ENCODE measurements at regions of chr1 and their contacts with region 1.

Region 1: GRCh38 chr1:174999216-174999925 is 376 bp upstream of the CACYBP start:
- DNase-seq: peak; percentile 95 to 99 (median 97)
- ATAC-seq: peak; percentile 75
- H3K4me3 ChIP-seq: peak overlapping the region; percentile 70
- H3K4me3 Mint-ChIP-seq: no peak overlapping the region
- H3K27ac ChIP-seq: peak overlapping the region; percentile 96 to 100
- H3K27ac Mint-ChIP-seq: no peak overlapping the region
- H3K4me1 ChIP-seq: peaks cover 23% of the 10 kb centered on the region
- H3K4me1 Mint-ChIP-seq: peaks cover 46% of the 10 kb centered on the region
- H3K27me3 ChIP-seq: no peaks in the 10 kb centered on the region
- H3K27me3 Mint-ChIP-seq: no peaks in the 10 kb centered on the region
- CTCF ChIP-seq: no peak

Region 2: GRCh38 chr1:173476664-173477285 is 1522.6 kb before region 1 on chr1:
- CTCF ChIA-PET with region 1: no interaction called
- POLR2A ChIA-PET with region 1: interaction called, 6 read pairs
- intact Hi-C with region 1: loop called in 1 of 2 experiments (anchors 5 kb)
- DNase-seq: peak; percentile 53 to 91 (median 75)
- ATAC-seq: peak; percentile 79
- H3K4me3 ChIP-seq: peak overlapping the region; percentile 84
- H3K4me3 Mint-ChIP-seq: peak overlapping the region; percentile 93
- H3K27ac ChIP-seq: peak overlapping the region; percentile 48 to 89
- H3K27ac Mint-ChIP-seq: peak overlapping the region; percentile 82
- H3K4me1 ChIP-seq: peaks cover 32% of the 10 kb centered on the region
- H3K4me1 Mint-ChIP-seq: peaks cover 72% of the 10 kb centered on the region
- H3K27me3 ChIP-seq: no peaks in the 10 kb centered on the region
- H3K27me3 Mint-ChIP-seq: no peaks in the 10 kb centered on the region
- CTCF ChIP-seq: no peak

Region 3: DNA sequence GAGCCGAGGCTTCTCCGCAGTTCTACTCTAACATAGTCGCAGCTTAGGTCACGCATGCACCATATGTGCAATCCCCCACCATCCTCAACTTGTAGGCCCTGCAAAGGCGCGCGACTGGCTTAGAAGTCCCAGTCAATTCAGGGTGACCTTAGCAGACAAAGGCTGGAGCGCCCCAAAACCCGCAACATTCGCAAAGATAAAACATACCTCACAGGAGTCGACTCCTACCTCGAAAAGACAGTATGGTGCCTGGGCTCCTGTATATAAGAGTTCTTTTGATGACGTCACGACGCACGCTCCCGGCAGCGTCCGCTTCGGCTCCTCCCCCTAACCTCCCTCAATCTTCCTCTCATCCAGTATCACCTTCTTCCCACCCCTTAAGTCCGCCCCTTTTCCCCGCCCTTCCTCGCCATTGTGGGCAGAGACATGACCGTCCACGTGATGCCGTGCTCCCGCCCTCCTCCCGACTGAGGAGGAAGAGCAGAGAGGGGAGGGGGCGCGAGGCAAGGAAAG is 1131.6 kb before region 1 on chr1 and contains the start of gene GAS5:
- CTCF ChIA-PET with region 1: no interaction called
- POLR2A ChIA-PET with region 1: interaction called, 30 read pairs
- intact Hi-C with region 1: loop called in 1 of 2 experiments (anchors 5 kb)
- DNase-seq: peak; percentile 98 to 100 (median 99)
- ATAC-seq: peak; percentile 79
- H3K4me3 ChIP-seq: peak within 1 kb of the TSS; percentile 90
- H3K4me3 Mint-ChIP-seq: peak within 1 kb of the TSS; percentile 93
- H3K27ac ChIP-seq: peak within 1 kb of the TSS; percentile 96
- H3K27ac Mint-ChIP-seq: peak within 1 kb of the TSS; percentile 95
- H3K4me1 ChIP-seq: peaks cover 59% of the 10 kb centered on the region
- H3K4me1 Mint-ChIP-seq: peaks cover 85% of the 10 kb centered on the region
- H3K27me3 ChIP-seq: no peaks in the 10 kb centered on the region
- H3K27me3 Mint-ChIP-seq: no peaks in the 10 kb centered on the region
- CTCF ChIP-seq: no peak
- total RNA-seq, gene GAS5: 865 to 867 TPM

Region 4: GRCh38 chr1:174262349-174263241 is 736.8 kb before region 1 on chr1:
- CTCF ChIA-PET with region 1: no interaction called
- POLR2A ChIA-PET with region 1: no interaction called
- intact Hi-C with region 1: loop called in 1 of 2 experiments (anchors 5 kb)
- DNase-seq: peak in 3 of 14 experiments; percentile 29 to 38 (median 35)
- ATAC-seq: no peak
- H3K4me3 ChIP-seq: no peak overlapping the region
- H3K4me3 Mint-ChIP-seq: no peak overlapping the region
- H3K27ac ChIP-seq: no peak overlapping the region
- H3K27ac Mint-ChIP-seq: no peak overlapping the region
- H3K4me1 ChIP-seq: no peaks in the 10 kb centered on the region
- H3K4me1 Mint-ChIP-seq: no peaks in the 10 kb centered on the region
- H3K27me3 ChIP-seq: no peaks in the 10 kb centered on the region
- H3K27me3 Mint-ChIP-seq: no peaks in the 10 kb centered on the region
- CTCF ChIP-seq: peak; percentile 30

Region 5: GRCh38 chr1:174659823-174660515 is 339.4 kb before region 1 on chr1:
- CTCF ChIA-PET with region 1: no interaction called
- POLR2A ChIA-PET with region 1: no interaction called
- intact Hi-C with region 1: no loop called
- DNase-seq: no peak
- ATAC-seq: no peak
- H3K4me3 ChIP-seq: no peak overlapping the region
- H3K4me3 Mint-ChIP-seq: no peak overlapping the region
- H3K27ac ChIP-seq: no peak overlapping the region
- H3K27ac Mint-ChIP-seq: no peak overlapping the region
- H3K4me1 ChIP-seq: no peaks in the 10 kb centered on the region
- H3K4me1 Mint-ChIP-seq: no peaks in the 10 kb centered on the region
- H3K27me3 ChIP-seq: no peaks in the 10 kb centered on the region
- H3K27me3 Mint-ChIP-seq: no peaks in the 10 kb centered on the region
- CTCF ChIP-seq: no peak

Region 6: GRCh38 chr1:174874331-174875053 is 124.9 kb before region 1 on chr1:
- CTCF ChIA-PET with region 1: interaction called, 3 read pairs
- POLR2A ChIA-PET with region 1: interaction called, 32 read pairs
- intact Hi-C with region 1: no loop called
- DNase-seq: peak in 3 of 14 experiments; percentile 15 to 22 (median 19)
- ATAC-seq: no peak
- H3K4me3 ChIP-seq: peak overlapping the region; percentile 46
- H3K4me3 Mint-ChIP-seq: peak overlapping the region; percentile 89
- H3K27ac ChIP-seq: no peak overlapping the region
- H3K27ac Mint-ChIP-seq: peak overlapping the region; percentile 78
- H3K4me1 ChIP-seq: peaks cover 3% of the 10 kb centered on the region
- H3K4me1 Mint-ChIP-seq: peaks cover 35% of the 10 kb centered on the region
- H3K27me3 ChIP-seq: no peaks in the 10 kb centered on the region
- H3K27me3 Mint-ChIP-seq: no peaks in the 10 kb centered on the region
- CTCF ChIP-seq: no peak

Region 7: DNA sequence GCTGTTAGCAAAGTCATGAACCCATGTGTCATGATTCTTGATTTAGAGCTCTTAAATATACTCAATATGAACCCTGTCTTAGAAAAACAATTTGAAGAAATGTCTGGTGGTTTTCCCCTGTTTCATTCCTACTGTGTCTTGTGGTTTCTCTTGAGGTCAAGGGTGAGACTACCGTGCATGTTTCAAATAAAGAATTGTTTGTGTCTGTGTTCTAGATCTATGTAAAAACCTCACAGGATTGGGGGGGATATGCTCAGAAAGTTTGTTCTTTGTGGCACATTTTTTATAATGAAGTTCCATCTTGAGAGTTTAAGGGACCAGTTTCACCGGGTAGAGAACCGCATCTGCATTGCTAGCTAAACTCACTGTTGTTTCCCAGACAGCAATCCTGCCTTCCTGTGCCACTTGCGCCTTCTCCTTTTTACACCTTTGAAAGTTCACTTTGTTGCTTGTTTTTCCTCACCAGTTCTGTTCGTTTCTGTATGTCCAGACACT is 30.6 kb before region 1 on chr1:
- CTCF ChIA-PET with region 1: interaction called, 25 read pairs
- POLR2A ChIA-PET with region 1: interaction called, 338 read pairs
- intact Hi-C with region 1: loop called (anchors 1 to 5 kb)
- DNase-seq: peak in 9 of 14 experiments; percentile 7 to 90 (median 28)
- ATAC-seq: peak; percentile 43
- H3K4me3 ChIP-seq: peak overlapping the region; percentile 26
- H3K4me3 Mint-ChIP-seq: peak overlapping the region; percentile 59
- H3K27ac ChIP-seq: peak overlapping the region; percentile 76 to 88
- H3K27ac Mint-ChIP-seq: peak overlapping the region; percentile 95
- H3K4me1 ChIP-seq: peaks cover 50% of the 10 kb centered on the region
- H3K4me1 Mint-ChIP-seq: peaks cover 71% of the 10 kb centered on the region
- H3K27me3 ChIP-seq: no peaks in the 10 kb centered on the region
- H3K27me3 Mint-ChIP-seq: no peaks in the 10 kb centered on the region
- CTCF ChIP-seq: no peak

Region 8: GRCh38 chr1:175023043-175023921 is 23.9 kb after region 1 on chr1 and contains the start of gene MRPS14:
- CTCF ChIA-PET with region 1: interaction called, 30 read pairs
- POLR2A ChIA-PET with region 1: interaction called, 268 read pairs
- intact Hi-C with region 1: loop called (anchors 1 kb)
- DNase-seq: peak; percentile 96 to 99 (median 98)
- ATAC-seq: peak; percentile 90
- H3K4me3 ChIP-seq: peak within 1 kb of the TSS; percentile 97
- H3K4me3 Mint-ChIP-seq: peak within 1 kb of the TSS; percentile 88
- H3K27ac ChIP-seq: peak within 1 kb of the TSS; percentile 84 to 91
- H3K27ac Mint-ChIP-seq: peak within 1 kb of the TSS; percentile 94
- H3K4me1 ChIP-seq: peaks cover 19% of the 10 kb centered on the region
- H3K4me1 Mint-ChIP-seq: peaks cover 34% of the 10 kb centered on the region
- H3K27me3 ChIP-seq: no peaks in the 10 kb centered on the region
- H3K27me3 Mint-ChIP-seq: no peaks in the 10 kb centered on the region
- CTCF ChIP-seq: no peak
- total RNA-seq, gene MRPS14: 8.5 to 9.6 TPM